ENCODE measurements at regions of chr5 and their contacts with region 1.

Region 1: GRCh38 chr5:83608122-83608521 is 112.5 kb downstream of the HAPLN1 start:
- DNase-seq: peak; percentile 57 to 59
- H3K4me3 ChIP-seq: no peak overlapping the region
- H3K4me3 Mint-ChIP-seq: no peak overlapping the region
- H3K27ac Mint-ChIP-seq: no peak overlapping the region
- H3K4me1 ChIP-seq: no peaks in the 10 kb centered on the region
- H3K4me1 Mint-ChIP-seq: no peaks in the 10 kb centered on the region
- H3K27me3 ChIP-seq: no peaks in the 10 kb centered on the region
- H3K27me3 Mint-ChIP-seq: peaks cover 3% of the 10 kb centered on the region
- CTCF ChIP-seq: peak; percentile 61 to 85

Region 2: GRCh38 chr5:83498585-83498984 is 109.5 kb before region 1 on chr5:
- CTCF ChIA-PET with region 1: no interaction called
- POLR2A ChIA-PET with region 1: no interaction called
- intact Hi-C with region 1: no loop called
- DNase-seq: no peak
- H3K4me3 ChIP-seq: no peak overlapping the region
- H3K4me3 Mint-ChIP-seq: no peak overlapping the region
- H3K27ac Mint-ChIP-seq: no peak overlapping the region
- H3K4me1 ChIP-seq: peaks cover 8% of the 10 kb centered on the region
- H3K4me1 Mint-ChIP-seq: peaks cover 10% of the 10 kb centered on the region
- H3K27me3 ChIP-seq: no peaks in the 10 kb centered on the region
- H3K27me3 Mint-ChIP-seq: no peaks in the 10 kb centered on the region
- CTCF ChIP-seq: no peak

Region 3: DNA sequence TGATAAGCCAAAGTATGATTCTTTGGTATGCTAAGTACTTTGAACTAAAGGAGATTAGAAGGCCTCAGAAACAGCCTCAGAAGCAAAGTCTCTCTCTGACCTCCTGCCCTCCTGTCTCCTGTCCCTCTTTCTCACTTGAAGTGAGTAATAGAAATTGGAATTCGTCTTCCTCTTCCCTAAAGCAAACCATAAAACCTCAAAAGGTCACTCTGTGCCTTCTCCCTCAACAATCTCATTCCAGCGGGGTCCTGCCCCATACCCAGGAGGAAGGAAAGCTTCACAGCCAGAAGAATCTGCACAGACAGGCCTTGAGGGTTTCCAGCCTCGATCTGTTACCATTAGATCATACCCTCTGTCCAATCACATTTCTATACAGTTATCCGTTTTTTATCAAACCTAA is 24.8 kb after region 1 on chr5:
- CTCF ChIA-PET with region 1: interaction called, 4 read pairs
- POLR2A ChIA-PET with region 1: no interaction called
- intact Hi-C with region 1: loop called (anchors 1 kb)
- DNase-seq: peak; percentile 46 to 71
- H3K4me3 ChIP-seq: no peak overlapping the region
- H3K4me3 Mint-ChIP-seq: no peak overlapping the region
- H3K27ac Mint-ChIP-seq: peak overlapping the region; percentile 3
- H3K4me1 ChIP-seq: peaks cover 23% of the 10 kb centered on the region
- H3K4me1 Mint-ChIP-seq: peaks cover 10% of the 10 kb centered on the region
- H3K27me3 ChIP-seq: no peaks in the 10 kb centered on the region
- H3K27me3 Mint-ChIP-seq: no peaks in the 10 kb centered on the region
- CTCF ChIP-seq: no peak

Region 4: DNA sequence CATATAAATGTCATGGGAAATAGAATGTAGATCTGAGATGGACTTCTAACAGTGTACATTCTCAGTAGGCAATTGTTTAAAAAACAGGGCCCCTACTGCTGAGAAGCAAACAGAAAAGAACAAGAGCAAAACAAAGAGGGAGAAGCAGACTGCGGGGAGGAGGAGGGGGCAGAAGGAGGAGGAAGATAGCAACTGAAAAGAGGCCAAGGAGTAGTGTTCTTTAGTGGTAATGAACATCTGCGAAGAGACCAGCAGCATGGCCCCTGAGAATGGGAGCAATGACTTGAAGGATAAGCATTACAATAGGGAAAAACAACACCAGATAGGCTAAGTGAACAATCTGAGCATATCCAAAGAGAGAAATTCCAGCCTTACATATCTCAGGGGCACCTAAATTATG is 75.7 kb after region 1 on chr5:
- CTCF ChIA-PET with region 1: no interaction called
- POLR2A ChIA-PET with region 1: no interaction called
- intact Hi-C with region 1: loop called (anchors 1 kb)
- DNase-seq: no peak
- H3K4me3 ChIP-seq: no peak overlapping the region
- H3K4me3 Mint-ChIP-seq: no peak overlapping the region
- H3K27ac Mint-ChIP-seq: no peak overlapping the region
- H3K4me1 ChIP-seq: peaks cover 7% of the 10 kb centered on the region
- H3K4me1 Mint-ChIP-seq: peaks cover 14% of the 10 kb centered on the region
- H3K27me3 ChIP-seq: no peaks in the 10 kb centered on the region
- H3K27me3 Mint-ChIP-seq: no peaks in the 10 kb centered on the region
- CTCF ChIP-seq: no peak

Region 5: GRCh38 chr5:83712001-83712601 is 104.0 kb after region 1 on chr5:
- CTCF ChIA-PET with region 1: interaction called, 6 read pairs
- POLR2A ChIA-PET with region 1: no interaction called
- intact Hi-C with region 1: loop called (anchors 1 kb)
- DNase-seq: peak in 1 of 2 experiments; percentile 67
- H3K4me3 ChIP-seq: no peak overlapping the region
- H3K4me3 Mint-ChIP-seq: no peak overlapping the region
- H3K27ac Mint-ChIP-seq: no peak overlapping the region
- H3K4me1 ChIP-seq: no peaks in the 10 kb centered on the region
- H3K4me1 Mint-ChIP-seq: peaks cover 29% of the 10 kb centered on the region
- H3K27me3 ChIP-seq: no peaks in the 10 kb centered on the region
- H3K27me3 Mint-ChIP-seq: peaks cover 14% of the 10 kb centered on the region
- CTCF ChIP-seq: peak; percentile 54 to 61

Measured in Caco-2 (cell line).